ENCODE measurements at regions of chr2 and their contacts with region 1.

Region 1: DNA sequence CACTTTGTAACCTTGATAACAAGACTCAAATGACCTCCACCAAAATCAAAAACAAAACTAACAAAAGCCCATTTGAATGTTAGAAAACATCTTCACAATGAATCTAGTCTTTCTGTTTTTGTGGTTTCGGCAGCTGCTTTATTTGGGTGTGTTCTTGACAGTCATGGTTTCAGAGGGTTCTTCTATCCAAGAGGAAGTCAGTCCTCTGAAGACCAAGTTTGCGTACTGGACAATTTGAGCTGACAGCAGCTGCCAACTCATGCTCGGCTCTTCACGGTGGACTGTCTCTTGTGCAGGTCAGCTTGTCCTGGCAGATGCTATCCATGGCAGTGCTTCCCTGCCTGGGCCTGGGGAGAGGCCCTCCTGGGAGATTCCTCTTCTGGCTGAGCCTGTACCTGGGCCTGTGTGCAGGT is 91.0 kb downstream of the TMEM17 start:
- DNase-seq: no peak
- ATAC-seq: peak in 1 of 2 donors; percentile 9
- H3K4me3 ChIP-seq: no peak overlapping the region
- H3K27ac ChIP-seq: no peak overlapping the region
- H3K4me1 ChIP-seq: no peaks in the 10 kb centered on the region
- H3K27me3 ChIP-seq: no peaks in the 10 kb centered on the region

Region 2: GRCh38 chr2:61910603-61911002 is 504.4 kb before region 1 on chr2:
- intact Hi-C with region 1: loop called in 2 of 4 experiments (anchors 5 kb)
- DNase-seq: no peak
- ATAC-seq: no peak
- H3K4me3 ChIP-seq: no peak overlapping the region
- H3K27ac ChIP-seq: no peak overlapping the region
- H3K4me1 ChIP-seq: no peaks in the 10 kb centered on the region
- H3K27me3 ChIP-seq: no peaks in the 10 kb centered on the region

Region 3: DNA sequence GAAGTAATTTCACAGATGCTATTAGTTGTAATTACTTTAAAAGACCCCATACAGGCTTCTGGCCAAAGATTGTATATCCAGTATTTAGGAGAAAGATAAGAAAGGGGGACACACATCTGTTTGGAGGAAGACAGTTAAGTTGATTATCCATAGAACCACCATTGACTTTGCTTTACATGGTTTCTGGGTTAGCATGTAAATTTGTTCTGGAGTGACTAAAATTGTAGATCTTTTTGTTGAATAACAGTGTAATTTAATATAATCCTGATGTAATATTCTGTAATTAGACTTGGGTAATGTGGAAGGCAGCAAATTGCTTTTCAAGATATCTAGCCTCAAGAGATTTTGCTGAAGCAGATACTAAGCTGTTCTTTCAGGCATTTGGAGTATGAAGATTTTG is 492.3 kb before region 1 on chr2:
- intact Hi-C with region 1: loop called (anchors 2 to 10 kb)
- DNase-seq: no peak
- ATAC-seq: no peak
- H3K4me3 ChIP-seq: no peak overlapping the region
- H3K27ac ChIP-seq: no peak overlapping the region
- H3K4me1 ChIP-seq: peaks cover 4% of the 10 kb centered on the region
- H3K27me3 ChIP-seq: no peaks in the 10 kb centered on the region

Region 4: GRCh38 chr2:61928826-61929461 is 486.1 kb before region 1 on chr2:
- intact Hi-C with region 1: loop called in 1 of 4 experiments (anchors 10 kb)
- DNase-seq: no peak
- ATAC-seq: peak; percentile 26 to 37
- H3K4me3 ChIP-seq: no peak overlapping the region
- H3K27ac ChIP-seq: peak overlapping the region; percentile 32
- H3K4me1 ChIP-seq: peaks cover 4% of the 10 kb centered on the region
- H3K27me3 ChIP-seq: no peaks in the 10 kb centered on the region

Region 5: GRCh38 chr2:61993444-61994024 is 421.5 kb before region 1 on chr2:
- intact Hi-C with region 1: loop called (anchors 5 to 10 kb)
- DNase-seq: no peak
- ATAC-seq: peak; percentile 64 to 76
- H3K4me3 ChIP-seq: no peak overlapping the region
- H3K27ac ChIP-seq: no peak overlapping the region
- H3K4me1 ChIP-seq: peaks cover 3% of the 10 kb centered on the region
- H3K27me3 ChIP-seq: no peaks in the 10 kb centered on the region

Region 6: GRCh38 chr2:63093512-63093911 is 678.5 kb after region 1 on chr2:
- intact Hi-C with region 1: no loop called
- DNase-seq: no peak
- ATAC-seq: no peak
- H3K4me3 ChIP-seq: no peak overlapping the region
- H3K27ac ChIP-seq: no peak overlapping the region
- H3K4me1 ChIP-seq: no peaks in the 10 kb centered on the region
- H3K27me3 ChIP-seq: no peaks in the 10 kb centered on the region

Measured in right cardiac atrium (tissue), 5 donors.